ENCODE measurements at regions of chr1 and their contacts with region 1.

Region 1: GRCh38 chr1:183915625-183916510 is 110.9 kb downstream of the RGL1 start:
- DNase-seq: peak; percentile 71
- ATAC-seq: peak; percentile 89 to 93

Region 2: GRCh38 chr1:183655562-183656075 is 260.2 kb before region 1 on chr1:
- intact Hi-C with region 1: loop called (anchors 2 to 5 kb)
- DNase-seq: peak; percentile 83
- ATAC-seq: peak; percentile 88 to 94

Region 3: DNA sequence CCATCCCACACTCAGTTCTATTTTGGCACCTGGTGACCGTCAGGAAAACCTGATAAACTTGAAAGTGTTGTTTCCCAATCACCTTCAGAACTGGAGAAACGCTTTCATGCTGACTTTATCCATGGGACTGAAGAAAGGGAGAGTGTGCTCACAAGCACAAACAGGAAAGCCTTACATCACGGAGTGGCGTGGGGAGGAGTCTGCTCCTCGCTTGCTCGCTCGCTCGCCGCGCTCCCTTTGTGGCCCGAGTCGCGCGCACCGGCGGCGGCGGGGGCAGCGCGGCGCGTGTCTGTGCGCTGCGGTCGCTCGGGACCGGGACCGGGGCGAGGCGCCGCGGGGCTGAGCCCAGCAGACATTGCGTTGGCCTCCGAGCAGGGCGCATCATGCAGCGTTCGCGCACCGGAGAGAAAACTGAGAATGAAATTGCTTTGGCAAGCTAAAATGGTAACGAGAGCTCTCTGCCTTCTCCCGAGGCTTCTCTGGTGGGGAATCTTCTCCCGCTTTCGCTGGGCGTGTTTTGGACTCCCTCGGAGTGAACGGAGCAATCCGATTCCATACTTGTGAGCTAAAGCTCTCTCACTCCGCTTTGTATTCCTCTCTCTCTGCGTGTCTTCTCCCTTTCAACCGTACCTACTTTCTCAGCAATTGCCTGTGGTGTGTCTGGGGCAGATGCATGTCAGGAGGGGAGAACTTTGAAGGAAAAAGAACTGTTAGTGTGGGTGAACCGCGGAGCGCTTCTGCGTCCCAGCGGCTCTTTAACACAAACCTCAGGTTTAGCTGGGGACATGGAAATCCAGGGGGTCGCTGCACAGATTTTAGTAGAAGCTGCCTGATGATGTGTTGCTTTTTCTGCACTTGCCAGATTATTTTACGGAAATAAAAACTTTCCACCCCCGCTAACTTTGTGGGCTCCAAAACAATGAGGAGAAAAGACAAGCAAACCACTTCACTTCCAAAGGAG is 110.7 kb before region 1 on chr1 and contains the start of gene RGL1:
- intact Hi-C with region 1: loop called in 1 of 2 experiments (anchors 10 kb)
- DNase-seq: peak; percentile 78
- ATAC-seq: peak; percentile 95 to 96
- total RNA-seq, gene RGL1: 22.5 to 32.7 TPM

Region 4: DNA sequence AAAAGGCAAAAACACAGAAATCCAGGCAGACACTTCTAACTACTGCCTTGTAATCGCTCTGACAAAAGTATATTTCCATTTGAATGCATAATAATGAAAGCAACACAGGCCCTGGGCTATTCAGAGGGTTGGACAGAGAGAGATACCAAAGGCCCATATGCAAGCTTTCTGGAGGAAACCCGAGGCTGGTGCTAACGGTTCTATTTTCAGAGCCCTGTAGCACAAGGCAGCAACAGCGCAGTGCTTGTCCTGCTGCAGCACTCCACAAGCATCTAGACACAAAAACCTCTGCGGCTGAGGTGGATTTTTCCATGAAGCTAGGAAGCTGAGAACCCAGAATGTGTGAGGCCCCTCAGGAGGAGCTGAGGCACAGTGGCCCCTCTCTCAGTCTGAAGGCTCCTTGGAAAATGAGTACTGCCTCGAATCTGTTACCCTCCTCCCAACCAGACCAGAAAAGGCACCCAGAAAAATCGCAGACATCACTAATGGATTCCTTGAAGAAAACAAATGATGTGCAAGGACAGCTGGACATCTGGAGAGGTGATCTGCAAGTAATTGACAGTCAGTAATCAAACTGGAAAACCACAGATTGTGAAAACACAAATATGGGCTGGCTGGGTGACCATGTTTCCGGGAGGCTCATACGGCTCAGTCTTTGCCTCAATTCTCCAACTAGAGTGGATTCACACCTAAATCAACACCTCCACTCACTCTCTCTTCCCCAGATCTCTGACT is 67.7 kb after region 1 on chr1:
- intact Hi-C with region 1: no loop called
- DNase-seq: no peak
- ATAC-seq: peak; percentile 42 to 59